Activated naive CD4-positive, alpha-beta T cell treated with anti-CD3 and anti-CD28 coated beads for 36 hours (primary cell): ENCODE measurements at regions of chr9 and their contacts with region 1.

Region 1: GRCh38 chr9:6353851-6354686 is 25.9 kb downstream of the TPD52L3 start:
- DNase-seq: peak; percentile 16
- H3K4me3 Mint-ChIP-seq: no peak overlapping the region
- H3K27ac Mint-ChIP-seq: no peak overlapping the region
- H3K4me1 Mint-ChIP-seq: peaks cover 10% of the 10 kb centered on the region
- H3K27me3 Mint-ChIP-seq: peaks cover 5% of the 10 kb centered on the region

Region 2: DNA sequence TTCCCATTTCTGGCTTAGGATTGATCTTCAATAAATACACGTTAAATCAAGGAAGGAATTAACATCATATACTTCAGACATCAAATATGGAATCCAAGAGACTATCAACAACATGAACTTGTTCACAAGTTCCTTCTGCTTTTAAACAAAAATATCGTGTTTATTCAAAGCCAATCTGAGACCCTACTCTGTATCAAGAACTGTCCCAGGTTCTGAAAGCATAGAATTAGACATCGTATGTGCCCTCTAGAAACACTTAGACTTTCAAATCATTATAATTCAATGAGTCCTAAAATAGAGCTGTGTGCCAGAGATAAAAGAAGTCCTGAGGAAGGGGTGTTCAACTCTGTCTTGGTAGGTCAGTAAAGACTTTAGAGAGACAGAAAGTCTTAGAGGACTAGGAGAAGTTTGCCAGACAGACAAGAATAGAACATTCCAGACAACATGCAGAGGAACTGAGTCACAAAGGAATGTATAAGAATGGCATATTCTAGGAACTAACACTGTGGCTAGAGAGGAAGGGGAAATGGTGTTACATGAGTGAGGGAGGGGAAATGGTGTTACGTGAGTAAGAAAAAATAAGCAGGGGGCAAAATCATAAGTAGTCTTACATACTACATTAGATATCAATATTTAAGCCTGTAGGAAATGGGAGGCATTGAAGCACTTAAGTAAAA is 23.0 kb before region 1 on chr9:
- CTCF ChIA-PET with region 1: no interaction called
- intact Hi-C with region 1: no loop called
- DNase-seq: no peak
- H3K4me3 Mint-ChIP-seq: no peak overlapping the region
- H3K27ac Mint-ChIP-seq: no peak overlapping the region
- H3K4me1 Mint-ChIP-seq: no peaks in the 10 kb centered on the region
- H3K27me3 Mint-ChIP-seq: peaks cover 11% of the 10 kb centered on the region

Region 3: DNA sequence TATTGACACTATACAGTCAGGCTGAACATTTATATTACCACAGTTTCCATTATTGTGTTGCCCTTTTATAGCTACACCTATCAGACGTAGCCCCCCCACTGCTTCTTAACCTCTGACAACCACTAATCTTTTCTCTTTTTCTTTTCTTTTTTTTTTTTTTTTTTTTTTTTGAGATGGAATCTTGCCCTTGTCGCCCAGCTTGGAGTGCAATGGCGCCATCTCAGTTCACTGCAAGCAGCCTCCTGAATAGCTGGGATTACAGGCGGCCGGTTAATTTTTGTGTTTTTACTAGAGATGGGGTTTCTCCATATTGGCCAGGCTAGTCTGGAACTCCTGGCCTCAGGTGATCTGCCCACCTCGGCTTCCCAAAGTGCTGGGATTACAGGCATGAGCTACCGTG is 134.3 kb after region 1 on chr9:
- CTCF ChIA-PET with region 1: interaction called, 3 read pairs
- intact Hi-C with region 1: loop called (anchors 2 kb)
- DNase-seq: no peak
- H3K4me3 Mint-ChIP-seq: no peak overlapping the region
- H3K27ac Mint-ChIP-seq: no peak overlapping the region
- H3K4me1 Mint-ChIP-seq: peaks cover 3% of the 10 kb centered on the region
- H3K27me3 Mint-ChIP-seq: no peaks in the 10 kb centered on the region

Region 4: DNA sequence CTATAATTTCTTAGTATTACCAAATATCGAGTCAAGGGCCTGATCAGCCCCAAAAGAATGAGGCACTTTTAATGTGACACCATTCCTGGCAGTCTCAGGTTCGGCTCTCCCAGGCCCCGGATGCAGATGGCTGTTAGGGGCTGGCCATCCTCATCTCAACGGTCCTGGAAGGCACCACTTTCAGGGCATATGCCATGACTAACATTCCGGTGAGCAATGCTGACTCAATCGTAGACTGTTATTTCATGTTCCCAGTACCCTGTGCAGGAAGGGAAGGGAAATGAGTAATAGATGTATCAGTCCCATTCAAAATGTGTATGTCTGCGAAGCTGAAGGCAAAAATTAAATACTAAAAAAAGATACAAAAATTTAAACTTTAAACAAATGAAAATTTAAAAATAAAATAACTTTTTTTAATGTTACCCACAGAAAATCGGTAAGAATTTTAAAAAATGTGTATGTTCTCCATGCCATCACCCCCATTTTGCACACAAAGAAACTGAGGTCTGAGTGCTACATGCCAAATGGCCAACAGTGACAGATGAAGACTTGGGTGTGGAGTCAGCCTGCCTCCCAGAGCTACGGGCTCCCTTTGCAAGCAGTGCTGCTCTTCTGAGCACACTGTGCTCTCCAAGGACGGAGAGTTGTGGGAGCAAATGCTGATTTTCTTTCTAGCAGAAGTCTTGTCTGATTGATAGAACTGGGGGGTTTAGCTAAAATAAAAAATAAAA is 212.5 kb after region 1 on chr9:
- CTCF ChIA-PET with region 1: interaction called, 107 read pairs
- intact Hi-C with region 1: loop called (anchors 1 kb)
- DNase-seq: peak; percentile 63
- H3K4me3 Mint-ChIP-seq: no peak overlapping the region
- H3K27ac Mint-ChIP-seq: peak overlapping the region; percentile 30
- H3K4me1 Mint-ChIP-seq: peaks cover 11% of the 10 kb centered on the region
- H3K27me3 Mint-ChIP-seq: no peaks in the 10 kb centered on the region

Region 5: DNA sequence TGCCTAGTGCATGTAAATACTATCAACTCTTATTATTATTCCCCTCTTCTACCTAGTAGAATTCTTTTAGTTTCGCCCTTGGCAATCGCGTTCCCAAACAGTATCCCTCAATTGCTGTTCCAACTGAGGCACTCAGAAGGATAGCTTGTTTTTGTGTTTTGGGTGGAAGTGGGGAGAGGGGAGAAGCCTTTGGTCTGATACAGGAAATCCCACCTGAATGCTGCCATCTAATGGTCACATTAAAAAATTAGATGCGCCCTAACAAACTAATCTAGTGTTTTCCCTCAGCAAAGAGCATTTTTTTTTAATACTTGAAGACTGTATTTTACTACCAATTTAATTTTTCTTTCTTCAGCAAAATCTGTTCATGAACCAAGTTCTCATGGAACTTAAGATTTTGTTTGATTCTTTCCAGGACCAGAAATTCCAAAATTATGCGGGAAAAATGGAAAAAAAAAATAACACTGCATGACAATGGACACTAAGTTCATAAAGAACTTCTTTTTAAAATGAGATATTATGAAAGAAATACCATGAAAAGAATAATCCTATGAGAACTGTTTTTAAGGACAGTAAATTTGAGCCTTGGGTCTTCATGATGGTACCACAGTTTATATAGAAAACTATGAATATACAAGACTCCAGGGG is 313.7 kb after region 1 on chr9:
- CTCF ChIA-PET with region 1: interaction called, 7 read pairs
- intact Hi-C with region 1: loop called (anchors 1 kb)
- DNase-seq: no peak
- H3K4me3 Mint-ChIP-seq: no peak overlapping the region
- H3K27ac Mint-ChIP-seq: no peak overlapping the region
- H3K4me1 Mint-ChIP-seq: peaks cover 2% of the 10 kb centered on the region
- H3K27me3 Mint-ChIP-seq: no peaks in the 10 kb centered on the region

Region 6: GRCh38 chr9:6739218-6739617 is 385.1 kb after region 1 on chr9:
- CTCF ChIA-PET with region 1: no interaction called
- intact Hi-C with region 1: loop called (anchors 2 kb)
- DNase-seq: no peak
- H3K4me3 Mint-ChIP-seq: no peak overlapping the region
- H3K27ac Mint-ChIP-seq: no peak overlapping the region
- H3K4me1 Mint-ChIP-seq: no peaks in the 10 kb centered on the region
- H3K27me3 Mint-ChIP-seq: no peaks in the 10 kb centered on the region

Region 7: GRCh38 chr9:7370381-7370780 is 1016.3 kb after region 1 on chr9:
- CTCF ChIA-PET with region 1: no interaction called
- intact Hi-C with region 1: no loop called
- DNase-seq: no peak
- H3K4me3 Mint-ChIP-seq: no peak overlapping the region
- H3K27ac Mint-ChIP-seq: no peak overlapping the region
- H3K4me1 Mint-ChIP-seq: no peaks in the 10 kb centered on the region
- H3K27me3 Mint-ChIP-seq: no peaks in the 10 kb centered on the region